ENCODE measurements at regions of chr12 and their contacts with region 1.

Region 1: GRCh38 chr12:47276621-47277309 is 197.0 kb upstream of the AMIGO2 start:
- DNase-seq: peak; percentile 75 to 85 (median 81)
- H3K4me3 ChIP-seq: peak overlapping the region in 1 of 2 donors; percentile 19
- H3K4me3 Mint-ChIP-seq: peak overlapping the region; percentile 51 to 87 (median 74)
- H3K27ac ChIP-seq: peak overlapping the region; percentile 55
- H3K27ac Mint-ChIP-seq: peak overlapping the region; percentile 85 to 98 (median 92)
- H3K4me1 ChIP-seq: peaks cover 44% of the 10 kb centered on the region
- H3K4me1 Mint-ChIP-seq: peaks cover 32 to 59% (median 53%) of the 10 kb centered on the region in 4 donors
- H3K27me3 ChIP-seq: no peaks in the 10 kb centered on the region
- H3K27me3 Mint-ChIP-seq: no peaks in the 10 kb centered on the region

Region 2: DNA sequence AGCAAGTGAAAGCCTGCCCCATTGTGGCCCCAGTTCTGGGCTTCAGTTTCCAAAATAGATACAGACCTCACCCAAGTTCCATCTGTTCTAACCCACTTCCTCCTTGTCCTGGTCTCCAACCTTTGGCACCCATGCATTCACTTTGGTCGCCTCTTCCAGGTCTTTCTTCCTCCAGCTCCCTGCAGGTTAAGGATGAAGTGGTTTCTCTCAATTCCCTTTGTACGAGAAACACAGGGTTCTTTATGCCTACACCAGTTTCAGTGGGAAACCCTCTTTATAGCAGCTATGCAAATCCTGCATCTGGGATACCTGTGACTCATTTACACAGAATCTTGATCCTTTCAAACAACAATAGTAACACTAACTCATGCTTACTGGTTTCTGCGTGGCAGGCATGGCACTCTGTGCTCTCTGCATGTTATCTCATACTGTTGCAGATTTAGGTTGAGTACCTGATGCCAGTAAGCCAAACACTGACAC is 86.5 kb before region 1 on chr12:
- CTCF ChIA-PET with region 1: no interaction called
- POLR2A ChIA-PET with region 1: interaction called, 16 read pairs
- intact Hi-C with region 1: no loop called
- DNase-seq: no peak
- H3K4me3 ChIP-seq: no peak overlapping the region
- H3K4me3 Mint-ChIP-seq: peak overlapping the region in 7 of 8 donors; percentile 8 to 93 (median 69)
- H3K27ac ChIP-seq: peak overlapping the region; percentile 42
- H3K27ac Mint-ChIP-seq: peak overlapping the region; percentile 62 to 95 (median 93)
- H3K4me1 ChIP-seq: peaks cover 80% of the 10 kb centered on the region
- H3K4me1 Mint-ChIP-seq: peaks cover 67 to 90% (median 78%) of the 10 kb centered on the region in 4 donors
- H3K27me3 ChIP-seq: no peaks in the 10 kb centered on the region
- H3K27me3 Mint-ChIP-seq: no peaks in the 10 kb centered on the region

Region 3: GRCh38 chr12:47207340-47207717 is 69.4 kb before region 1 on chr12:
- CTCF ChIA-PET with region 1: interaction called, 3 read pairs
- POLR2A ChIA-PET with region 1: interaction called, 19 read pairs
- intact Hi-C with region 1: no loop called
- DNase-seq: peak; percentile 38 to 76 (median 44)
- H3K4me3 ChIP-seq: peak overlapping the region; percentile 24 to 64
- H3K4me3 Mint-ChIP-seq: peak overlapping the region; percentile 68 to 97 (median 82)
- H3K27ac ChIP-seq: peak overlapping the region; percentile 60
- H3K27ac Mint-ChIP-seq: peak overlapping the region; percentile 87 to 96 (median 94)
- H3K4me1 ChIP-seq: peaks cover 77% of the 10 kb centered on the region
- H3K4me1 Mint-ChIP-seq: peaks cover 64 to 88% (median 76%) of the 10 kb centered on the region in 4 donors
- H3K27me3 ChIP-seq: no peaks in the 10 kb centered on the region
- H3K27me3 Mint-ChIP-seq: no peaks in the 10 kb centered on the region

Region 4: DNA sequence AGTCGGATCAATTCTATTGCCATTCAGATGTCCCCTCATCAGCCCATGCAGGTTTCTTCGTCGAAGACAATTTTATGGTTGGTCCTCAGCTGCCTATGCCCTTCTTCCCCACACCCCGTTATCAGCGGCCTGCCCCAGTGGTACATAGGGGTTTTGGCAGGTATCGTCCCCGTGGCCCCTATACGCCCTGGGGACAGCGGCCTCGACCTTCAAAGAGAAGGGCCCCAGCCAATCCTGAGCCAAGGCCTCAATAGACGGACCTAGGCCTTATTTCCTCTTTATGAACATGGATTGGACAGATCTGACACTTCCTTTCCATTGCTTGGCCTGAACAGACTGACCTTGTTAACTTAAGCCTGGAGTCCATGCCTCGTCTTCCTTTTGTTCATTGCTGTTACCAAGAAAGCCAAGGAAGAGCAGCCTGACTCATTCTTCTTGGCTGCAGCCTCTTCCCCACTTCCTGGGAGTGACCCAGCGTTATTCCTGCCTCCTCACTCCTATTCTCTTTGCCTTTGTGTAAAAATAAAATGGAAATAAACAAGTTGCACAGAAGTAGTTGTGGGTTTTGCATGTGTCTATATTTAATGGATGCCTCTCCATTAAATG is 40.6 kb before region 1 on chr12:
- CTCF ChIA-PET with region 1: interaction called, 3 read pairs
- POLR2A ChIA-PET with region 1: interaction called, 6 read pairs
- intact Hi-C with region 1: loop called (anchors 5 kb)
- DNase-seq: no peak
- H3K4me3 ChIP-seq: no peak overlapping the region
- H3K4me3 Mint-ChIP-seq: peak overlapping the region in 4 of 8 donors; percentile 15 to 59 (median 48)
- H3K27ac ChIP-seq: no peak overlapping the region
- H3K27ac Mint-ChIP-seq: peak overlapping the region in 6 of 7 donors; percentile 9 to 86 (median 68)
- H3K4me1 ChIP-seq: peaks cover 41% of the 10 kb centered on the region
- H3K4me1 Mint-ChIP-seq: peaks cover 38 to 62% (median 51%) of the 10 kb centered on the region in 4 donors
- H3K27me3 ChIP-seq: no peaks in the 10 kb centered on the region
- H3K27me3 Mint-ChIP-seq: no peaks in the 10 kb centered on the region

Region 5: GRCh38 chr12:47296828-47297227 is 20.1 kb after region 1 on chr12:
- CTCF ChIA-PET with region 1: interaction called, 6 read pairs
- POLR2A ChIA-PET with region 1: interaction called, 14 read pairs
- intact Hi-C with region 1: no loop called
- DNase-seq: no peak
- H3K4me3 ChIP-seq: no peak overlapping the region
- H3K4me3 Mint-ChIP-seq: no peak overlapping the region
- H3K27ac ChIP-seq: no peak overlapping the region
- H3K27ac Mint-ChIP-seq: peak overlapping the region in 1 of 7 donors; percentile 18
- H3K4me1 ChIP-seq: peaks cover 31% of the 10 kb centered on the region
- H3K4me1 Mint-ChIP-seq: peaks cover 20 to 47% (median 27%) of the 10 kb centered on the region in 4 donors
- H3K27me3 ChIP-seq: no peaks in the 10 kb centered on the region
- H3K27me3 Mint-ChIP-seq: no peaks in the 10 kb centered on the region

Region 6: GRCh38 chr12:47302111-47302671 is 25.4 kb after region 1 on chr12:
- CTCF ChIA-PET with region 1: interaction called, 19 read pairs
- POLR2A ChIA-PET with region 1: interaction called, 55 read pairs
- intact Hi-C with region 1: loop called (anchors 1 kb)
- DNase-seq: no peak
- H3K4me3 ChIP-seq: no peak overlapping the region
- H3K4me3 Mint-ChIP-seq: peak overlapping the region in 3 of 8 donors; percentile 34 to 46 (median 41)
- H3K27ac ChIP-seq: no peak overlapping the region
- H3K27ac Mint-ChIP-seq: peak overlapping the region in 4 of 7 donors; percentile 44 to 90 (median 76)
- H3K4me1 ChIP-seq: peaks cover 43% of the 10 kb centered on the region
- H3K4me1 Mint-ChIP-seq: peaks cover 39 to 64% (median 51%) of the 10 kb centered on the region in 4 donors
- H3K27me3 ChIP-seq: no peaks in the 10 kb centered on the region
- H3K27me3 Mint-ChIP-seq: no peaks in the 10 kb centered on the region

Measured in CD4-positive, alpha-beta memory T cell (primary cell).